ENCODE measurements at regions of chr6 and their contacts with region 1.

Region 1: DNA sequence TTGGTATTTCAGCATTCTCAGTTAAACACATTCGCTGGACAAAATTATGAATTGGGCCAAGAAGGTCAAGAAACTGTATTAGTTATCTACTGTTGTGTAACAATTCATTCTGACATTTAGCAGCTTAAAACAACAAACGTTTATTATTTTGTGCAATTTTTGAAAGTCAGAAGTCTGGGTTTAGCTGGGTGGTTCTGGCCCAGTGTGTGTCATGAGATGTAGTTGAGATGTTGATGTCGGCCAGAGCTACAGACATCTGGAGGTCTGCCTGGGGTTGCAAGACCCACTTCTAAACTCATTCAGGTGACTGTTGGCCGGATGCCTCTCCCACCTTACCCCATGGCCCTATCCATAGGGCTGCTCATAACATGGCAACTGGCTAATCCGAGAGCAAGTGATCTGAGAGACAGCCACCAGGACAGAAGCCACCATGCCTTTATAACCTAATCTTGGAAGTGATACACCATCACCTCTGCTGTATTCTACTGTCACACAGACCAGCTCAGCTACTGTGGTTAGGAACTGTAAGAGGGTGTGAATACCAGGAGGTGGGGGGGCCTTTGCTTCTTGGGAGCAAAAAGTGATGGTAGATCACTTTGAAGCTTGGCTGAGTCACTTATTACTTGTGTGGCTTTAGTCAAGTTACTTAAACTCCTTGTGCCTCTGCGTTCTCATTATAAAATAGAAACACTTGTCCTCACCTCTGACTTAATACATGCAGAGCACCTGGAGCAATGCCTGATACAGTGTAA is 217.0 kb upstream of the MYLIP start:
- DNase-seq: no peak
- ATAC-seq: no peak
- H3K4me3 ChIP-seq: no peak overlapping the region
- H3K27ac ChIP-seq: no peak overlapping the region
- H3K4me1 ChIP-seq: peaks cover 20% of the 10 kb centered on the region
- H3K27me3 ChIP-seq: no peaks in the 10 kb centered on the region
- CTCF ChIP-seq: no peak
- EP300 ChIP-seq: no peak
- POLR2A ChIP-seq: no peak
- RAD21 ChIP-seq: no peak

Region 2: GRCh38 chr6:15712797-15713196 is 199.1 kb before region 1 on chr6:
- CTCF ChIA-PET with region 1: no interaction called
- POLR2A ChIA-PET with region 1: no interaction called
- RAD21 ChIA-PET with region 1: no interaction called
- SMC1A ChIA-PET with region 1: no interaction called
- in situ Hi-C with region 1: no loop called
- intact Hi-C with region 1: no loop called
- DNase-seq: no peak
- ATAC-seq: no peak
- H3K4me3 ChIP-seq: no peak overlapping the region
- H3K27ac ChIP-seq: no peak overlapping the region
- H3K4me1 ChIP-seq: no peaks in the 10 kb centered on the region
- H3K27me3 ChIP-seq: no peaks in the 10 kb centered on the region
- CTCF ChIP-seq: no peak
- EP300 ChIP-seq: no peak
- POLR2A ChIP-seq: no peak
- RAD21 ChIP-seq: no peak

Region 3: GRCh38 chr6:15854826-15855710 is 56.9 kb before region 1 on chr6:
- CTCF ChIA-PET with region 1: no interaction called
- POLR2A ChIA-PET with region 1: no interaction called
- RAD21 ChIA-PET with region 1: no interaction called
- SMC1A ChIA-PET with region 1: no interaction called
- in situ Hi-C with region 1: no loop called
- intact Hi-C with region 1: no loop called
- DNase-seq: no peak
- ATAC-seq: no peak
- H3K4me3 ChIP-seq: no peak overlapping the region
- H3K27ac ChIP-seq: no peak overlapping the region
- H3K4me1 ChIP-seq: no peaks in the 10 kb centered on the region
- H3K27me3 ChIP-seq: no peaks in the 10 kb centered on the region; a peak in 1 of 4 replicates
- CTCF ChIP-seq: no peak
- EP300 ChIP-seq: no peak
- POLR2A ChIP-seq: no peak
- RAD21 ChIP-seq: no peak

Region 4: GRCh38 chr6:15948930-15949900 is 37.3 kb after region 1 on chr6:
- CTCF ChIA-PET with region 1: no interaction called
- POLR2A ChIA-PET with region 1: interaction called, 4 read pairs
- RAD21 ChIA-PET with region 1: interaction called, 60 read pairs
- SMC1A ChIA-PET with region 1: interaction called, 16 read pairs
- in situ Hi-C with region 1: no loop called
- intact Hi-C with region 1: no loop called
- DNase-seq: no peak
- ATAC-seq: no peak
- H3K4me3 ChIP-seq: no peak overlapping the region
- H3K27ac ChIP-seq: no peak overlapping the region
- H3K4me1 ChIP-seq: peaks cover 19% of the 10 kb centered on the region
- H3K27me3 ChIP-seq: no peaks in the 10 kb centered on the region
- CTCF ChIP-seq: no peak
- EP300 ChIP-seq: no peak
- POLR2A ChIP-seq: no peak
- RAD21 ChIP-seq: no peak

Region 5: GRCh38 chr6:15969236-15969778 is 57.4 kb after region 1 on chr6:
- CTCF ChIA-PET with region 1: no interaction called
- POLR2A ChIA-PET with region 1: no interaction called
- RAD21 ChIA-PET with region 1: no interaction called
- SMC1A ChIA-PET with region 1: no interaction called
- in situ Hi-C with region 1: no loop called
- intact Hi-C with region 1: no loop called
- DNase-seq: no peak
- ATAC-seq: no peak
- H3K4me3 ChIP-seq: no peak overlapping the region
- H3K27ac ChIP-seq: no peak overlapping the region
- H3K4me1 ChIP-seq: no peaks in the 10 kb centered on the region
- H3K27me3 ChIP-seq: no peaks in the 10 kb centered on the region
- CTCF ChIP-seq: no peak
- EP300 ChIP-seq: no peak
- POLR2A ChIP-seq: no peak
- RAD21 ChIP-seq: no peak

Measured in GM12878 (cell line).